Activated CD4-positive, alpha-beta T cell treated with anti-CD3 and anti-CD28 coated beads for 36 hours (primary cell): ENCODE measurements at regions of chr1 and their contacts with region 1.

Region 1: GRCh38 chr1:182839209-182840065 is at the start of gene DHX9:
- DNase-seq: peak; percentile 97
- ATAC-seq: peak; percentile 89
- H3K4me3 Mint-ChIP-seq: peak within 1 kb of the TSS; percentile 92
- H3K27ac Mint-ChIP-seq: peak within 1 kb of the TSS; percentile 99
- H3K4me1 Mint-ChIP-seq: peaks cover 36% of the 10 kb centered on the region
- H3K27me3 Mint-ChIP-seq: no peaks in the 10 kb centered on the region
- total RNA-seq, gene DHX9: 244 to 255 TPM

Region 2: DNA sequence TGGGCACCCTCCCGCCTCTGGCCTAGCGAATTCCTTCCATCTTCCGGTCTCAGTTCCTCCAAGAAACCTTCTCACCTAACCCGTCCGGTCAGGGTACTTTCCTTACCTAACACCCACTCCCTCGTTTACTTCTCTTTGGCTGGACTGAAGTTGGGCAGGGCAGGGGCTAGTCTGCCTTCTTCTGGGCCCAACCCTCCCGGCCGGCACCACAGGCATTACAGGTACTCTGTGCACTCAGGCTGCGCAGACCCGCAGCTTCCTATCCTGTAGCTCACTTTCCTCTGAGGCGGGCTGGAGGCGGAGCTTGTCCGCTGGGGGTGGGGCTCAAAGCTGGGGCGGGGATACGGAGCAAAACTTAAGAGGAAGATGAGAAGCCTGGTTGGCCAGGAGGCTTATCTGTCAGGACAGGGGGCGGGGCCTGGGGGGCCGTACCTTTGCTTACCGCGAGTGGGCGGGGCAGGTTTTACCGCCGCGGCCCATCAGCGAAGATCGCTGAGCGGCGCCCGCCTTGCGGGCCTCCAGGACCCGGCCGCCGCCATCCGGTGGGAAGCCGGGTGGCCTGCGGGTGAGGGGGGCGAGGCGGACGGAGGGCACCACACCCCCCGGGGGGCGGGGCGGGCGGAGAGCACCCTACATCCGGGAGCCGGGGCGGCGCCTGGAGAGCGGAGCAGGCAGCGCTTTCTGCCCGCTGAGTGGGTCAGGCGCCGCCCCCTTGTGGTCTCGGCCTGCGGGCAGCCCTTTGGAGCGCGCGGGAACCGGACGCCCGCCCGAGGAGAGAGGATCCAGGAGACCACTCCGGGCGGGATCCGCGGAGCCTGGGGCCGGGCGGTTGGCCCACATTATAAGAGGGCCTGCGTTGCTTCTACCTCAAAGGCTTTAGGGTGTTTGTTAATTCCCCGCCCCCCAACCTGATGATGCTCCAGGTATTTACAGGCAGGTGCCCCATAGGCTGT is 809.8 kb before region 1 on chr1:
- CTCF ChIA-PET with region 1: no interaction called
- POLR2A ChIA-PET with region 1: no interaction called
- intact Hi-C with region 1: loop called in 1 of 2 experiments (anchors 1 kb)
- DNase-seq: peak; percentile 99
- ATAC-seq: peak; percentile 96
- H3K4me3 Mint-ChIP-seq: peak overlapping the region; percentile 86
- H3K27ac Mint-ChIP-seq: peak overlapping the region; percentile 97
- H3K4me1 Mint-ChIP-seq: peaks cover 11% of the 10 kb centered on the region
- H3K27me3 Mint-ChIP-seq: no peaks in the 10 kb centered on the region

Region 3: DNA sequence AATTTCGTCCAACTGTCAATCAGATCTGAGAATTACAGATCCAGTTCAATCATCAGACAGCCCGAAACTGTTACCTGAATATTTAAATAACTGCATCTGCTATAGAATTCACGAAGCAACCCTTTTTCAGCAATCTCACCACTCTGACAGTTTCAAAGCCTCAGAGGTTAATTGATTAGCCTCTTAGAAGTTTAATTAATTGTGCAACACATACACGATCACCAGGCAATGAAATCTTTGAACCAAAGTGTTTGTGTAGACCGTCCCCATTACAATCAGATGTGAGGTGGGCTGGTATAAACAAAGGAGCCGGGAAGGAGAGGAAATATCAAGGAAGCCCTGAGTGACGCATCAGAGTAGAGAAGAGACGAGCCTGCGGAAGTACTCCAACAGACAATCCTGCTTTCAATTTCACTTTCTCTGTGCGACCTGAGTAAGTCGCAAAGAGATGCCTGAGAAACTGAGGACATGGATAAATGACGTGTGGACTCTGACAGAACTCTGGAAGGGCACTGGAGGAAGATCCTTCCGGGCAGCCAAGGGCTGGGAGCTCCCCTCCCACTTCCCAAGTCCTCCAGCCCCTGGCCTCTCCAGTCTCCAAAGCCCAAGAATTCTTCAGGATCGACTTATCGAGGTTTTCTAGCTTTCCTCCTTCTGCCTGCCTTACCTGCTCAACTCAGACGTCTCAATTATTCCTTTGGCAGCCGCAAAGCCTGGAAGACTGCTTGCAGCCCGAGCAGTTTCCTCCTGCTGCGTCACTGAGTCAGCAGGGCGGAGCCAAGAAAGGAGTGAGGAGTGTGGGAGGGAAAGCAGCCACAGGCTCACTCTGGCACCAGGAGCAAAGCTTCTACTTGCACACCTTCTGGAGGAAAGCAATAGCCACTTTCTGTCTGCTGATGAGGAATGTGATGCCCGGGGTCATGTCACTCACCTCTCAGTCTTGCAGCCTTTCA is 250.7 kb before region 1 on chr1 and contains the start of gene RNASEL:
- CTCF ChIA-PET with region 1: no interaction called
- POLR2A ChIA-PET with region 1: interaction called, 3 read pairs
- intact Hi-C with region 1: loop called in 1 of 2 experiments (anchors 1 kb)
- DNase-seq: peak; percentile 74
- ATAC-seq: peak; percentile 92
- H3K4me3 Mint-ChIP-seq: peak within 1 kb of the TSS; percentile 89
- H3K27ac Mint-ChIP-seq: peak within 1 kb of the TSS; percentile 99
- H3K4me1 Mint-ChIP-seq: peaks cover 45% of the 10 kb centered on the region
- H3K27me3 Mint-ChIP-seq: no peaks in the 10 kb centered on the region
- total RNA-seq, gene RNASEL: 3.7 to 4.0 TPM

Region 4: DNA sequence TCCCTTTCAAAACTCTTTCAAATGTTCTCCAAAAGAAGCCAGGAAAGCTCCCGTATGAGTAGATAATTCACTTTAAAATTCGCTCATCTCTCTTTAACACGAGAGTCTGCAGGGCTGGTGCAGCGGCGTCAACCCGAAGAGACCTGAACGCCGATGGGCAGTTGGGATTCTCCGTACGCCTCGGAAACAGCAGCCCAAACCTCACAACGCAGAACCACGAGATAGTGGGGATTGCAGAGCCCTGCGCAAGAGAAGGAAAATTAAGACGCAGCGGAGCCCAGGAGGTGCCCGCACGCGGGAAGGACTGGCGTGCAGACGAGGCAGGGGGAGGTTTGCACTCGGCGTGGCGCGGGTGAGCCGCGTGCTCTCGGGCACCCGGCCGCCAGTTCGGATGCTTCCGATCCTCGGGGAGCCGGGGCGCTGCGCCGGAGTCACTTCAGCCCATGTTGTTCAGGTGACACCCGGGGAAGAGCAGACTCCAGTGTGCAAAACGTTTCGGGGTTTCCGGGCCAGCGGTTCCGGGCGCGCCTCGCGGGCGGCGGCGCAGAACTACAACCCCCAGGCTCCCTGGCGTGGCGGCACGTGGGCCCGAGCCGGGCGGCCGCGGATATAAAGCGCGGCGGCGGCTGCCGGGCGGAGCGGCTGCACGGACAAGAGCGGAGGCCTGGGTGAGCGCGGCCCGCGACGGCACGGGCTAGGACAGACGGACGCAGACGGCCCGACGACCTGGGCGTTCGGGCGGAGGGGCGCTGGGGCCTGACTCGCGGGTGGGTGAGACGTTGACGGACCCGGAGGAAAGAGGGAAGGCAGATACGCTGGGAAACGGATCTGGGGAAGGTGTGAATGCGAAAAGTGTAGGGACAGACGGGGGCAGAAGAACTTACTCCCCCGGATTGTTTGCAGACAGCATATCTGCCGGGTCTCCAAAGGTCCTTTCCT is 50.0 kb before region 1 on chr1 and contains the start of gene NPL:
- CTCF ChIA-PET with region 1: no interaction called
- POLR2A ChIA-PET with region 1: no interaction called
- intact Hi-C with region 1: loop called (anchors 1 kb)
- DNase-seq: peak; percentile 90
- ATAC-seq: peak; percentile 95
- H3K4me3 Mint-ChIP-seq: peak within 1 kb of the TSS; percentile 79
- H3K27ac Mint-ChIP-seq: peak within 1 kb of the TSS; percentile 68
- H3K4me1 Mint-ChIP-seq: peaks cover 11% of the 10 kb centered on the region
- H3K27me3 Mint-ChIP-seq: peaks cover 4% of the 10 kb centered on the region
- total RNA-seq, gene NPL: 4.0 to 5.6 TPM

Region 5: GRCh38 chr1:182861994-182862393 is 22.6 kb after region 1 on chr1:
- CTCF ChIA-PET with region 1: interaction called, 4 read pairs
- POLR2A ChIA-PET with region 1: interaction called, 3 read pairs
- intact Hi-C with region 1: loop called (anchors 2 kb)
- DNase-seq: no peak
- ATAC-seq: peak; percentile 83
- H3K4me3 Mint-ChIP-seq: no peak overlapping the region
- H3K27ac Mint-ChIP-seq: peak overlapping the region; percentile 77
- H3K4me1 Mint-ChIP-seq: peaks cover 50% of the 10 kb centered on the region
- H3K27me3 Mint-ChIP-seq: no peaks in the 10 kb centered on the region

Region 6: DNA sequence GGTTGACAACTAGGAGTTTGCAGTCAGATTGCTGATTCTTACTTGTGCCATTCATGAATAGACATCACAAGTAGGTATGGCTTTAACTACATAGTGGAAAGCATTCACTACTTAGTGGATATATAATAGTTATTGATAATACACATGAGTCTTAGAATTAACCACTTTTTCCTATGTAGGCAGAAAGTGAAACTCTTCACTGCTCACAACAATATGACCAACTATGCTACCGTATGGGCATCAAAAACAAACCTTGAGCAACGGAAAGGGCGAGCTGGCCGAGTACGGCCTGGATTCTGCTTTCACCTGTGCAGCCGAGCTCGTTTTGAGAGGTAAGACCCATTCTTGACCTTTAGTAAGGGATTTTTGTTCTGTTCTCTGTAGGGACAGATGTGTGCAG is 38.4 kb after region 1 on chr1:
- CTCF ChIA-PET with region 1: no interaction called
- POLR2A ChIA-PET with region 1: no interaction called
- intact Hi-C with region 1: loop called (anchors 5 kb)
- DNase-seq: peak; percentile 61
- ATAC-seq: peak; percentile 75
- H3K4me3 Mint-ChIP-seq: no peak overlapping the region
- H3K27ac Mint-ChIP-seq: peak overlapping the region; percentile 78
- H3K4me1 Mint-ChIP-seq: peaks cover 38% of the 10 kb centered on the region
- H3K27me3 Mint-ChIP-seq: no peaks in the 10 kb centered on the region

Region 7: DNA sequence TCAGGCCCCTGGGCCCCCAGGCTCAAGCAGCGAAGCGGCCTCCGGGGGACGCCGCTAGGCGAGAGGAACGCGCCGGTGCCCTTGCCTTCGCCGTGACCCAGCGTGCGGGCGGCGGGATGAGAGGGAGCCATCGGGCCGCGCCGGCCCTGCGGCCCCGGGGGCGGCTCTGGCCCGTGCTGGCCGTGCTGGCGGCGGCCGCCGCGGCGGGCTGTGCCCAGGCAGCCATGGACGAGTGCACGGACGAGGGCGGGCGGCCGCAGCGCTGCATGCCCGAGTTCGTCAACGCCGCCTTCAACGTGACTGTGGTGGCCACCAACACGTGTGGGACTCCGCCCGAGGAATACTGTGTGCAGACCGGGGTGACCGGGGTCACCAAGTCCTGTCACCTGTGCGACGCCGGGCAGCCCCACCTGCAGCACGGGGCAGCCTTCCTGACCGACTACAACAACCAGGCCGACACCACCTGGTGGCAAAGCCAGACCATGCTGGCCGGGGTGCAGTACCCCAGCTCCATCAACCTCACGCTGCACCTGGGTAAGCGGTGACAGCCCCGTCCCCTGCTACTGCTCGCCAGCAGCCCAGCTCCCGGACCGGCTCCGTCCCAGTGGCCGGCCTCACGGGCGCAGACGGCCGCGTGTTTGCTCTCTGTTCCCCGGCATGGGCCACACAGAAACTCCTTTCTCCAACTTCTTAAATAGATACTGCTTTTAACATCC is 184.3 kb after region 1 on chr1:
- CTCF ChIA-PET with region 1: no interaction called
- POLR2A ChIA-PET with region 1: no interaction called
- intact Hi-C with region 1: loop called in 1 of 2 experiments (anchors 5 kb)
- DNase-seq: peak; percentile 70
- ATAC-seq: peak; percentile 74
- H3K4me3 Mint-ChIP-seq: peak overlapping the region; percentile 58
- H3K27ac Mint-ChIP-seq: no peak overlapping the region
- H3K4me1 Mint-ChIP-seq: peaks cover 10% of the 10 kb centered on the region
- H3K27me3 Mint-ChIP-seq: peaks cover 54% of the 10 kb centered on the region